Posterior vena cava (tissue), 2 donors: ENCODE measurements at regions of chr13 and their contacts with region 1.

Region 1: GRCh38 chr13:102580552-102581169 is 16.1 kb upstream of the TPP2 start:
- DNase-seq: no peak

Region 2: GRCh38 chr13:102620516-102620915 is 39.9 kb after region 1 on chr13:
- intact Hi-C with region 1: no loop called
- DNase-seq: no peak

Region 3: DNA sequence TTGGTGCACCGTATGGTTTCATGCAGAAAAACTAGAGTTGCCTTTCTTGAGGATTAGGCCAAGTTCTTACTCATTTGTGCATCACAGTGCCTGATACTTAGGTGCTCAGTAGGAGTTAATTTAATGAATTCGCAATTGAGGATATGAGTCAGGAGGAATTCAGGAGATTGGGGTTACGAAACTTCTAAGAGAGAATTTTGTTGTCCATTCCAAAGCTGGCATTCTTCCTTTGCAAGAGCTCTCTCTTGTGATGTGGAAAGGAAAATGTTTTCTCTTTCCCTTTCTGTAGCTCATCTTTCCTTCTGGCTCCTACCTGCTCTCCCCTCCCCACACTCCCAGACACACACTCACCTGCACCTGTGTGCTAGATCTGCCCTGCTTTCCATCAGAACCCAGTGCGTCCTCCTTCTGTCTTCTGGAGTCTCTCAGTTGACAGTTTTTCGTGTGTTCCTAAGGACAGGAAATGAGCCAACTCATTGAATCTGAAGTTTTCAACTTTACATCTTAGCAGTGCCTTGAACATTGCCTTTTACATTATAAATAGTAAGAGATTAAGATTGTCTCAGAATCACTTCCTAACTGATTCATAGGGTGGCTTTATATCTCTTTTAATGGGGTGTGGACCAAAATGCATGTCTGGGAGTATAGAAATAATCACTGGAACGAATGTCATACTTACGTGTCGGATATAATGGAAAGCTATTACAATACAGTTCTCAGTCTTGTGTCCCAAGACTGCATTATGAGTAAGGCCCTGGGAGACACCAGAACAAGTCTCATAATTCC is 245.5 kb after region 1 on chr13:
- intact Hi-C with region 1: no loop called
- DNase-seq: no peak

Region 4: GRCh38 chr13:102854675-102855074 is 274.0 kb after region 1 on chr13:
- intact Hi-C with region 1: loop called in 1 of 2 experiments (anchors 5 kb)
- DNase-seq: no peak